HCT116 (cell line): ENCODE measurements at regions of chr6 and their contacts with region 1.

Region 1: GRCh38 chr6:36302227-36302976 is 32.5 kb downstream of the PNPLA1 start:
- DNase-seq: peak; percentile 90
- ATAC-seq: peak; percentile 98
- H3K4me3 ChIP-seq: no peak overlapping the region
- H3K27ac ChIP-seq: no peak overlapping the region
- H3K4me1 ChIP-seq: peaks cover 0 to 4% of the 10 kb centered on the region in 2 experiments; a peak in 1 of 4 replicates
- H3K27me3 ChIP-seq: no peaks in the 10 kb centered on the region
- CTCF ChIP-seq: peak; percentile 95 to 99 (median 96)
- POLR2A ChIP-seq: no peak
- RAD21 ChIP-seq: peak; percentile 75

Region 2: GRCh38 chr6:36027501-36028087 is 274.8 kb before region 1 on chr6 and contains the start of gene MAPK14:
- CTCF ChIA-PET with region 1: no interaction called
- POLR2A ChIA-PET with region 1: no interaction called
- RAD21 ChIA-PET with region 1: no interaction called
- intact Hi-C with region 1: loop called (anchors 2 kb)
- DNase-seq: peak; percentile 100
- ATAC-seq: peak; percentile 93
- H3K4me3 ChIP-seq: peak within 1 kb of the TSS; percentile 95 to 98
- H3K27ac ChIP-seq: peak within 1 kb of the TSS; percentile 86
- H3K4me1 ChIP-seq: peaks cover 4 to 21% of the 10 kb centered on the region in 2 experiments; a peak in 3 of 4 replicates
- H3K27me3 ChIP-seq: no peaks in the 10 kb centered on the region
- CTCF ChIP-seq: peak; percentile 78 to 88 (median 79)
- POLR2A ChIP-seq: peak; percentile 89
- RAD21 ChIP-seq: peak; percentile 91
- total RNA-seq, gene MAPK14: 34.2 TPM

Region 3: GRCh38 chr6:36285797-36286196 is 16.6 kb before region 1 on chr6:
- CTCF ChIA-PET with region 1: interaction called, 36 read pairs
- POLR2A ChIA-PET with region 1: no interaction called
- RAD21 ChIA-PET with region 1: no interaction called
- intact Hi-C with region 1: no loop called
- DNase-seq: no peak
- ATAC-seq: no peak
- H3K4me3 ChIP-seq: no peak overlapping the region
- H3K27ac ChIP-seq: no peak overlapping the region
- H3K4me1 ChIP-seq: peaks cover 0 to 20% of the 10 kb centered on the region in 2 experiments; a peak in 3 of 4 replicates
- H3K27me3 ChIP-seq: no peaks in the 10 kb centered on the region
- CTCF ChIP-seq: no peak
- POLR2A ChIP-seq: no peak
- RAD21 ChIP-seq: no peak

Region 4: DNA sequence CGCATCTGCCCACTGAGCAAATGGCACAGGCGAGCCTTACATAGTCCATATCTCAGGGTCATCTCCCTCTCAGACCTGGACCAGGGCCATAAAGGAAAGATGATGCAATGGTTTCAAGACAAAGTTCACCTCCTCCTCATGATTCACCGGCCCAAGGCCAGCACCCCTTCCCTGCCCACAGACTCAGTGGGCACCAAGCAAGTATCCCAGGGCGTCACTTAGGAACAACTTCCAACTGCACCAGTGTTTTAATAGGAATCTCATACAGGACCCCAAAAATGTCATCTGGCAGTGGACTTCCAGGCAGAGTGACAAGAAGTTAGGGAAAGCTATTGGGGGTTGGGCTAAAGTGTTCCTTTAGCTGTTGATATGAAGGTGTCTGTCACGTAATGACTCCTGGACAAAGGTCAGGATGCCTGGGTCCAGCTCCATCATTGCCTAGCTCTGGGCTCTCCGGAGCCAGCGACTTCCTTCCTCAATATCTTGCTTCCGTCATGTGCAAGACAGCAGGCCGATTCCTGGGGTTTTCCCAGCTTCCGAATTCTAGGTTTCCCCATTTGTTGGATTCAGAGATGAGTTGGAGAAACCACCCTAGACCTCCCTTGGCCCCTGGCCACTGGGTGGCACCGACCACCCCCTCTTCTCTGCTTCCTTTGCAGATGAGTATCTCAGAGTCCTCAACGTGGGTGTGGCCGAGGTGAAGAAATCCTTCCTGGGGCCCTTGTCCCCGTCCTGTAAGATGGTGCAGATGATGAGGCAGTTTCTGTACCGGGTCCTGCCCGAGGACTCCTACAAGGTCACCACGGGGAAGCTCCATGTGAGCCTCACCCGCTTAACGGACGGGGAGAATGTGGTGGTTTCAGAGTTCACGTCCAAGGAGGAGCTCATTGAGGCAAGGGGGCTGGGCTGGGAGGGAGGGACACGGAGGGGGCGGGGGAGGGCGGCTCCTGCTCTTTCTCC is 11.5 kb before region 1 on chr6:
- CTCF ChIA-PET with region 1: interaction called, 36 read pairs
- POLR2A ChIA-PET with region 1: no interaction called
- RAD21 ChIA-PET with region 1: no interaction called
- intact Hi-C with region 1: no loop called
- DNase-seq: peak; percentile 13
- ATAC-seq: no peak
- H3K4me3 ChIP-seq: no peak overlapping the region
- H3K27ac ChIP-seq: no peak overlapping the region
- H3K4me1 ChIP-seq: peaks cover 0 to 22% of the 10 kb centered on the region in 2 experiments; a peak in 3 of 4 replicates
- H3K27me3 ChIP-seq: no peaks in the 10 kb centered on the region
- CTCF ChIP-seq: no peak
- POLR2A ChIP-seq: no peak
- RAD21 ChIP-seq: no peak

Region 5: GRCh38 chr6:36340618-36341454 is 38.4 kb after region 1 on chr6:
- CTCF ChIA-PET with region 1: interaction called, 13 read pairs
- POLR2A ChIA-PET with region 1: no interaction called
- RAD21 ChIA-PET with region 1: no interaction called
- intact Hi-C with region 1: no loop called
- DNase-seq: peak; percentile 48
- ATAC-seq: peak; percentile 92
- H3K4me3 ChIP-seq: peak overlapping the region; percentile 33 to 49
- H3K27ac ChIP-seq: no peak overlapping the region
- H3K4me1 ChIP-seq: peaks cover 5 to 13% of the 10 kb centered on the region in 2 experiments
- H3K27me3 ChIP-seq: no peaks in the 10 kb centered on the region
- CTCF ChIP-seq: peak; percentile 67 to 99 (median 96)
- POLR2A ChIP-seq: no peak
- RAD21 ChIP-seq: peak; percentile 62

Region 6: DNA sequence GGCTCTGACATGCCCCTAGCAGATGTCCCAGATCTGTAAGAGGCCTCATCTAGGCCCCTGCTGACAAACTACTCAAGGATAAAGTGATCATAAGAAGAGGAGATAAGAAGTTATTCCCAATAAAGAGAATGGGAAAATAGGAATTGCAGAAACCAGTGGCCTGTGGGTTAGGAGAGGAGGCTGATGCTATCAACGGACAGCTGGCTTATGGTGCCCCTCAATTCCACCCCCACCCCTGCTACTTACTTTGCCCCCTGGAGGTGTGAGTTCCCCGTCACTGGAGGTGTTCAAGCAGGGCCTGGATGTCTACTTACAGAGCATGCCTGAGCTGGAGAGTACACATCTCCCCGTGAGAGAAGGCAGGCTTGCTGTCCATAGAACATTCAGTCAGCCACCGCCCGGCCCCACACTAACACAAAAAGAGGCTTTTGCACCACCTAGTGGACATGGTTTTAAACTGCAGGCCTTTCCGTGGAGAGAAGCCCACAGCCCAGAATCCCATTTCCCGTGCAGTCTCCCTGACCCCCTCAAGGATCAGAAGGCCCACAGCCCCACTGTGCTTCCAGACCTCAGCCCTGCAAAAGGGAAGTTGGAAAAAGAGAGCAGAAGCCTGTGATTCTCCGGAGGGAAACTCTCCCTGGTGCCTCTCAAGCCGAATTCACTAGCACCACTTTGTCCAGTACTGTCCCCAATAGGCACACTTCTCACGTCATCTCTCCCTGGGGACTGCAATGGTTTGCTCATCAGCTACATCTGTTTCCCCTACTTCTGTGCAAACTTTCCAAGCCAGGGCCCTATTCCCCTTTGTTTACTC is 58.0 kb after region 1 on chr6:
- CTCF ChIA-PET with region 1: interaction called, 10 read pairs
- POLR2A ChIA-PET with region 1: interaction called, 3 read pairs
- RAD21 ChIA-PET with region 1: interaction called in 1 of 2 experiments, 3 read pairs
- intact Hi-C with region 1: loop called (anchors 1 kb)
- DNase-seq: peak; percentile 60
- ATAC-seq: peak; percentile 97
- H3K4me3 ChIP-seq: no peak overlapping the region
- H3K27ac ChIP-seq: no peak overlapping the region
- H3K4me1 ChIP-seq: peaks cover 0 to 4% of the 10 kb centered on the region in 2 experiments; a peak in 1 of 4 replicates
- H3K27me3 ChIP-seq: no peaks in the 10 kb centered on the region
- CTCF ChIP-seq: peak; percentile 77 to 86 (median 85)
- POLR2A ChIP-seq: no peak
- RAD21 ChIP-seq: peak; percentile 94